Calu3 (cell line): ENCODE measurements at regions of chr2 and their contacts with region 1.

Region 1: GRCh38 chr2:21042958-21043743 is 722 bp downstream of the APOB start:
- DNase-seq: peak; percentile 68
- H3K4me3 Mint-ChIP-seq: peak overlapping the region; percentile 19
- H3K27ac Mint-ChIP-seq: no peak overlapping the region
- H3K4me1 Mint-ChIP-seq: peaks cover 7% of the 10 kb centered on the region
- H3K27me3 Mint-ChIP-seq: peaks cover 100% of the 10 kb centered on the region
- CTCF ChIP-seq: peak; percentile 95

Region 2: DNA sequence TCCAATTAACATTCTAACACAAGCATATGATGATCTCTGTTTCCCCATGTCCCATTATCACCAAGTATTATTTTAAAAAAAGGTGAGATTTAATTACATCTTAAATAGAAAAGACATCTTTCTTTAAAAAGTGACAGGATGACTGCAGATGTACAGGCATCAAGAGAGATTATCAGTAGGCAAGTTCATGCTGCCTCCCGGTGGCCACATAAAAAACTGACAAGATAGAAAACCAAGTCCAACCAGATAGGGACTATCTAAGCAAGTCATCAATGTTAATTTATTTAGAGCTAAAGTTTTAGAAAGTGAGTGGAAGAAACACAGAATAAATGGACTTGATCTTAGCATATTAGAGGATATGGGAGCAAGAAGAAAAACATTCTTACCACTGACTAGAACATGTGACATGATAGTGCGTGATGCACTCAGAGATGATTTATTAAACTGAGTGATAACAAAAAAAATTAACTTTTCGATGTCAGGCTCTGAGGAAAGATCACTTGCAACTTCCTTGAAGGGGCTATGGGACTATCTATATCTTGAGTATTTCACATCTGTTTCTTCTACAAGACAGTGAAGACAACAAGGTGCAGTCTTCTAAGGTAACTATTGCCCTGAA is 75.3 kb after region 1 on chr2:
- CTCF ChIA-PET with region 1: interaction called, 3 read pairs
- intact Hi-C with region 1: loop called (anchors 1 kb)
- DNase-seq: no peak
- H3K4me3 Mint-ChIP-seq: no peak overlapping the region
- H3K27ac Mint-ChIP-seq: no peak overlapping the region
- H3K4me1 Mint-ChIP-seq: no peaks in the 10 kb centered on the region
- H3K27me3 Mint-ChIP-seq: peaks cover 36% of the 10 kb centered on the region
- CTCF ChIP-seq: peak; percentile 29

Region 3: DNA sequence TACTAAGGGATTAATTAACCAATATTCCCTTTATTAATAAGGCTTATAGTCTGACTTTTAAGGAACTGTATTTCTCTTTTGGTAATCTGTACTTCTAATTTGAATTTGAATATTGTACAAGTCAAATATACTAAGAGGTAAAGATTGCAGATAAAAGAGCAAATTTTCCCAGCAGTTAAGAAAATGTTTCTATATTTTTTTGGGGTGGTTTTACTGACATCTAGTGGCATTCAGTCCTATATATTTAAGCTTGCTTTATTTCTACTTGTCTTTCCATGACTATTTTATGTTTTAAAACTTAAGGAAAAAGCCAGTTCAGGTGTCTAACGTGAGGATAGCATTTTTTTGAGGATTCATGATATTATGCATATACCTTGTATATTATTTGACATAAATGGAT is 122.2 kb after region 1 on chr2:
- CTCF ChIA-PET with region 1: interaction called, 3 read pairs
- intact Hi-C with region 1: loop called (anchors 1 kb)
- DNase-seq: no peak
- H3K4me3 Mint-ChIP-seq: no peak overlapping the region
- H3K27ac Mint-ChIP-seq: no peak overlapping the region
- H3K4me1 Mint-ChIP-seq: no peaks in the 10 kb centered on the region
- H3K27me3 Mint-ChIP-seq: no peaks in the 10 kb centered on the region
- CTCF ChIP-seq: no peak

Region 4: DNA sequence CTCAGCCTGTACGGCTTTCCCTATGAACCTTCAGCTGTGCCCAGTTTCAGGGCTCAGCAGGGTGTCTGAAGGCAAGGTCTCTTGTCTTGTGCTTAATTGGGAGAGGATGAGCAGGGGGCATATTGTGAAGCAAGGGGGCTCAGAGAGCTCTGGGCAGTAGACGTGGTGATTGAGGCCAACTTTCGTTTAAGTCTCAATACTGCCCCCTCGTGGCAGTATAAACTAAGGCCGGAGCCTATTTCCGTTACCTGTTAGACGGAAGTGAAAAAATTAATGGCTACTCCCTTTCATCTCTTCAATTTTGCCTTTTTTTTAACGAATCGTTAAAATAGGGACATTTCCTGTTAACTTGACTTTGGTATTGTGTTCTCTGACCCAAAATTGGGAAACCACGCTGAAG is 274.0 kb after region 1 on chr2:
- CTCF ChIA-PET with region 1: interaction called, 3 read pairs
- intact Hi-C with region 1: loop called (anchors 1 kb)
- DNase-seq: peak; percentile 61
- H3K4me3 Mint-ChIP-seq: no peak overlapping the region
- H3K27ac Mint-ChIP-seq: no peak overlapping the region
- H3K4me1 Mint-ChIP-seq: no peaks in the 10 kb centered on the region
- H3K27me3 Mint-ChIP-seq: peaks cover 18% of the 10 kb centered on the region
- CTCF ChIP-seq: peak; percentile 46